GM13977 (cell line): ENCODE measurements at regions of chr2 and their contacts with region 1.

Region 1: GRCh38 chr2:11124503-11125068 is 30.7 kb upstream of the SLC66A3 start:
- DNase-seq: peak; percentile 78
- CTCF ChIP-seq: peak; percentile 90

Region 2: GRCh38 chr2:10832203-10832936 is 292.2 kb before region 1 on chr2:
- in situ Hi-C with region 1: loop called (anchors 5 kb)
- DNase-seq: peak; percentile 90
- CTCF ChIP-seq: peak; percentile 98

Region 3: DNA sequence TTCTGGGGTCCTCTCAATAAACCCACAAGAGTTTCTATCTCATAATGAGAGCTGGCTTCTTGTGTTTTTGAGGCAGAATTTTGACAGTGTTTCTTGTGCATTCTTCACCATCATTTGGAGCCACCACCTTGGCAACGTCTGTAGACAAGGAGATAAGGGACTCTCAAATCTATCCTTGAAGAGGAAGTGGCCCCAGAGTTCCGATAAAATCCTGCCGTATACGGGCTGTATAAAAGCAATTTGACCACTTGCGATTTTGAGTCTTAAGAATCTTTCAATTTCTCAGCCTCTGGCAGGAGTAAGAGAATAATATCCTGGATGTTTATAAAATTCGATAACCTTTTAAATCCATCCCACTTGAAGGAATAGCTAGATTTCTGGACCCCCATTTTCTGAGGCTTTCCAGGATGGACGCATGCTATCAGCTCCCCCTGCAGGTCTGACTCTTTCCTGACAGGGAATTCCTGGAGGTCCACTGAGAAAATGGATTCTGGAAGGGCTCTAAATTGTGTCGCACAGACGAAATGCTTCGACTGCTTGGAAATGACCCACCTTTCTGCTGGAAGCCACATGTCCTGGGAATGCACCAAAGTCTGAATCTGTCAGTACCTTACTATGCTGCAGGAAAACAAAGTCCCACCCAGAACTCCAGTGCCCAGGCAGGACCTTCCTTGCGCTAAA is 287.3 kb after region 1 on chr2:
- in situ Hi-C with region 1: loop called (anchors 25 kb)
- DNase-seq: no peak
- CTCF ChIP-seq: peak; percentile 63